ENCODE measurements at regions of chr13 and their contacts with region 1.

Region 1: DNA sequence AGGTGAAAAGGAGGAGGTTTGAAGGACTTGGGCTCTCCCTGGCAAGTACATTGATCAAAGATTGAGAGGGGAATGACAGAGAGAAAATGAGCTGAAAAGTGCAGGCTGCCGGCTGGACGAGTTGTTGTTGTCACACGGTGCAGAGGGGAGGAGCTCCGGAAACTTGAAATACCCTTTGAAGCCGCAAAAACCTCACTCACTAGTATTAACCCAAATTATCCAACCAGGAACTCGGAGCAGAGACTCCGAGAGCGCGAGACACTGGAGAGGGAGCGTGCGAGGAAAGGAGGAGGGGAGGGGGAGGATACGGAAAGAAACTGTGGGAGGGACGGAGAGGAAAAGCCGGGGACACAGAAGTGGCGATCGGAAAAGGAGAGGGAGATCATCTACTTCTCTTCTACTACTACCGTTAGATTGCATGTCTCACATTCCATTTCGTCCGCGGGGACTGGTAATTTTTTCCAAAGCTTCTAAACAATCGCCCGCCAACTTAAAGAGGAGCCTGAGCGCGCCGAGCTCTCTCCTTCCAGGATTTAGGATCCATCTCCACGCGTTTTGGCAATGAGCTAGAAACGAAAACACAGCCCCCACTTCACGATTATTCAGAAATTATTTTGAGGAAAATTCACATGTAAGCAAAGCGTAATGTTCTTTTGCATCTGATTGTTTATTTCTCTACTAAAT is at the start of gene DACH1:
- DNase-seq: peak; percentile 93
- H3K4me3 ChIP-seq: peak within 1 kb of the TSS; percentile 75 to 98 (median 95)
- H3K27ac ChIP-seq: peak within 1 kb of the TSS; percentile 48
- H3K4me1 ChIP-seq: peaks cover 3% of the 10 kb centered on the region
- H3K27me3 ChIP-seq: peaks cover 0 to 4% of the 10 kb centered on the region in 2 experiments
- CTCF ChIP-seq: no peak
- POLR2A ChIP-seq: peak; percentile 20
- total RNA-seq, gene DACH1: 24.0 and 28.3 TPM in 2 replicates

Region 2: GRCh38 chr13:70623239-70623638 is 1244.0 kb before region 1 on chr13:
- CTCF ChIA-PET with region 1: no interaction called
- POLR2A ChIA-PET with region 1: no interaction called
- dilution Hi-C with region 1: no loop called
- intact Hi-C with region 1: loop called (anchors 10 kb)
- DNase-seq: peak; percentile 57
- H3K4me3 ChIP-seq: no peak overlapping the region
- H3K27ac ChIP-seq: no peak overlapping the region
- H3K4me1 ChIP-seq: no peaks in the 10 kb centered on the region
- H3K27me3 ChIP-seq: no peaks in the 10 kb centered on the region
- CTCF ChIP-seq: no peak
- POLR2A ChIP-seq: no peak

Region 3: DNA sequence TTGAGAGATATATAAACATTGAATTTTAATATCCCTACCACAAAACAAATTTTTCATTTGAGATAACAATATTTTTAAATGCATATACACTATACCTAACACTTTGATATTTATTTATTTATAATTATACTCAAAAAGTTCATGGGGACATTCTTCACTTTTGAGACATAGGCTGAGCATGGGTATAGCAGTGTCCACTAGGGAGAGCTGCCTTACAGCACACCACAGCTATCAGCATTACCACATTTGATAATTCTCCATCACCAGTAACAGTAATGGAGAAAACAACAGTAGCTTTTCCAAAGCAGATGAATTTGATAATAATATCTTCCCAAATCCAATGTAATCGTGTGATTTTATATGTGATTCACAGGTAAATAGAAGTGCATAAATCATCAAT is 626.4 kb before region 1 on chr13:
- CTCF ChIA-PET with region 1: no interaction called
- POLR2A ChIA-PET with region 1: no interaction called
- dilution Hi-C with region 1: no loop called
- intact Hi-C with region 1: loop called (anchors 1 kb)
- DNase-seq: peak; percentile 68
- H3K4me3 ChIP-seq: no peak overlapping the region
- H3K27ac ChIP-seq: no peak overlapping the region
- H3K4me1 ChIP-seq: peaks cover 14% of the 10 kb centered on the region
- H3K27me3 ChIP-seq: no peaks in the 10 kb centered on the region
- CTCF ChIP-seq: peak; percentile 36 to 56
- POLR2A ChIP-seq: no peak

Region 4: DNA sequence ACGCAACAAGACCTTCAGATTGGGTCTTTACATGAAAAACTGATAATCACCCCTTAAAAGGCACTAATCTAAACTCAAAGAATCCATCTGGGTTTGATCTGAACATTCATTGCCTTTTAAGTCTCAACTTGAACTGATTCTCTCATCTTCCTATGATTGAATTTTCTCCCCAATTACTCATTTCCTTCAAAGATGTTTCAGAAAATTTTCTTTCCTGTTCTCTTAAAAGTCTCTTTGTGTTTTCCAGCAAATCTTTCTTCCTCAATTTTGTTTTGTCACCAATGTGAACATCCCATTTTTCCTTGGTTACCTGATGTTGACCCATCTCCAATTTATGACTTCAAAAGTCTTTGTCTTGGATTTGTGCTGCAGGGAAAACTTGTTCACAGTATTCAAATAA is 234.6 kb before region 1 on chr13:
- CTCF ChIA-PET with region 1: no interaction called
- POLR2A ChIA-PET with region 1: no interaction called
- dilution Hi-C with region 1: no loop called
- intact Hi-C with region 1: loop called (anchors 2 kb)
- DNase-seq: peak; percentile 73
- H3K4me3 ChIP-seq: no peak overlapping the region
- H3K27ac ChIP-seq: peak overlapping the region; percentile 80
- H3K4me1 ChIP-seq: peaks cover 27% of the 10 kb centered on the region
- H3K27me3 ChIP-seq: no peaks in the 10 kb centered on the region
- CTCF ChIP-seq: no peak
- POLR2A ChIP-seq: no peak

Region 5: GRCh38 chr13:71789693-71790329 is 77.5 kb before region 1 on chr13:
- CTCF ChIA-PET with region 1: no interaction called
- POLR2A ChIA-PET with region 1: no interaction called
- dilution Hi-C with region 1: no loop called
- intact Hi-C with region 1: loop called (anchors 2 kb)
- DNase-seq: peak; percentile 94
- H3K4me3 ChIP-seq: no peak overlapping the region
- H3K27ac ChIP-seq: peak overlapping the region; percentile 61
- H3K4me1 ChIP-seq: peaks cover 17% of the 10 kb centered on the region
- H3K27me3 ChIP-seq: no peaks in the 10 kb centered on the region
- CTCF ChIP-seq: no peak
- POLR2A ChIP-seq: no peak

Region 6: DNA sequence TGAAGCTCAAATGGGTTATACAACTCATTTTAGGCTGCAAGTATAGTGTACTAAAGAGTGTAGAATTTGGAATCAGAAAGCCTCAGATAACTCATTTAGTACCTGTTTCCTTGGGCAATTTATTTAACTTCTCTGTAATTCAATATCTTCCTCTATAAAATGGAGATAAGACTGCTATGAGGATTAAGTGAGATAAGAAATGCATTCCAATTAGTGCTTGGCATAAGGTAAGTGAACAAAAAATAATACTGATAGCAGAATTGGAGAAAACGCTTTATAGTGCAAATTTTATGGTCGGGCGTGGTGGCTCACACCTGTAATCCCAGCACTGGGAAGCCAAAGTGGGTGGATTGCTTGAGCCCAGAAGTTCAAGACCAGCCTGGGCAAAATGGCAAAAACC is 25.3 kb before region 1 on chr13:
- CTCF ChIA-PET with region 1: no interaction called
- POLR2A ChIA-PET with region 1: no interaction called
- dilution Hi-C with region 1: no loop called
- intact Hi-C with region 1: no loop called
- DNase-seq: no peak
- H3K4me3 ChIP-seq: no peak overlapping the region
- H3K27ac ChIP-seq: no peak overlapping the region
- H3K4me1 ChIP-seq: no peaks in the 10 kb centered on the region
- H3K27me3 ChIP-seq: no peaks in the 10 kb centered on the region
- CTCF ChIP-seq: no peak
- POLR2A ChIP-seq: no peak

Region 7: GRCh38 chr13:72696579-72696978 is 829.3 kb after region 1 on chr13:
- CTCF ChIA-PET with region 1: no interaction called
- POLR2A ChIA-PET with region 1: no interaction called
- dilution Hi-C with region 1: no loop called
- intact Hi-C with region 1: loop called (anchors 10 kb)
- DNase-seq: peak; percentile 45
- H3K4me3 ChIP-seq: no peak overlapping the region
- H3K27ac ChIP-seq: no peak overlapping the region
- H3K4me1 ChIP-seq: no peaks in the 10 kb centered on the region
- H3K27me3 ChIP-seq: peaks cover 16 to 21% of the 10 kb centered on the region in 2 experiments
- CTCF ChIP-seq: peak in 1 of 2 donors; percentile 2
- POLR2A ChIP-seq: no peak

Measured in endothelial cell of umbilical vein (primary cell).